Panc1 (cell line): ENCODE measurements at regions of chr6 and their contacts with region 1.

Region 1: GRCh38 chr6:30678964-30679726 is 6.3 kb upstream of the DHX16 start:
- DNase-seq: no peak
- ATAC-seq: peak; percentile 78
- H3K4me3 ChIP-seq: peak overlapping the region; percentile 1 to 45; a peak in 3 of 4 replicates
- H3K27ac ChIP-seq: peak overlapping the region; percentile 64
- H3K4me1 ChIP-seq: peaks cover 19% of the 10 kb centered on the region
- H3K27me3 ChIP-seq: no peaks in the 10 kb centered on the region
- CTCF ChIP-seq: peak; percentile 98

Region 2: DNA sequence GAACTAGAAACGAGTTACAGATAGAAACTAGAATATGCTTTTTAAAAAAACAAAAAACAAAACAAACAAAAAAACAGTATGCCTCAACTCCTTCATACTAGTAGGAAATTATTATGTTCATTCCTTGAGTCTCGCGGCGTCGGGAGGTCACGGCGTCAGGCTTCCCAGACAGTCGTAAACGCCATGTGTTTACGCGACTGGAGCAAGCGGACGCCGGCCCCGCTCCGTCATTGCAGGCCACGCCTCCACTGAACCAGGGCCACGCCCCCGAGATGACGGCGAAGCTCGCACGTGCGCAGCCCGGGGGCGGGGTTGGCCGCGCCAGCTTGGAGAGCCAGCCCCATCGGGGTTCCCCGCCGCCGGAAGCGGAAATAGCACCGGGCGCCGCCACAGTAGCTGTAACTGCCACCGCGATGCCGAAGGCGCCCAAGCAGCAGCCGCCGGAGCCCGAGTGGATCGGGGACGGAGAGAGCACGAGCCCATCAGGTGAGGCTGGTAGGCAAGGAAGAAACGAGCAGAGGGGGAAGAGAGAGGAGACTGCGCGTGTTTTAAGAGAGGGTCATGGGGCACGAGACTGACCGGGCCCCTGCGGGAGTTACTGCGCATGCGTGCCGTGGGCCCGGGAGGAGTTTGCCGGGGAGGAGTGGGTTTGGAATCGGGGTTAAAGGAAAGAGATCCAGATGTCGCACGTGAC is 107.9 kb before region 1 on chr6 and contains the start of gene ABCF1:
- CTCF ChIA-PET with region 1: no interaction called
- POLR2A ChIA-PET with region 1: no interaction called
- in situ Hi-C with region 1: no loop called
- intact Hi-C with region 1: no loop called
- DNase-seq: peak; percentile 81
- ATAC-seq: peak; percentile 97
- H3K4me3 ChIP-seq: peak within 1 kb of the TSS; percentile 88 to 97
- H3K27ac ChIP-seq: peak within 1 kb of the TSS; percentile 95
- H3K4me1 ChIP-seq: peaks cover 24% of the 10 kb centered on the region
- H3K27me3 ChIP-seq: no peaks in the 10 kb centered on the region
- CTCF ChIP-seq: no peak
- total RNA-seq, gene ABCF1: 94.9 TPM

Region 3: DNA sequence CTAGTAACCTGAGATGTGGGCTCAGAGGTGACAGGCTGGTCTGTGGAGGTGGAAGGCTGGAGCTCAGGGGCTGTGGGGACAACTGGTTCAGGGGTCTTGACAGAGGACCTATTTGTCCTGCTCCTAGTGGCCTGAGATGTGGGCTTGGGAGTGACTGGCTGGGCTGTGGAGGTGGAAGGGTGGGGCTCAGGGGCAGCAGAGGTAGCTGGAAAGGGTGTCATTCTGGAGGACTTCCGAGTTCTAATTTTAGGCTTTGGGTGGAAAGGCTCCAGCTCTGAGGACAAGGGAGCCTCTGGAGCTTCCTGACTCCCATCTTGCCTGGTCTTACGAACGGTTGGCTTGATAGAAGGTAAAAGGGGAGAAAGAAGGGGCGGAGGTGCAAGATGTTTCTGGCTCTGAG is 26.5 kb after region 1 on chr6:
- CTCF ChIA-PET with region 1: interaction called, 4 read pairs
- POLR2A ChIA-PET with region 1: interaction called, 10 read pairs
- in situ Hi-C with region 1: no loop called
- intact Hi-C with region 1: no loop called
- DNase-seq: no peak
- ATAC-seq: no peak
- H3K4me3 ChIP-seq: no peak overlapping the region
- H3K27ac ChIP-seq: no peak overlapping the region
- H3K4me1 ChIP-seq: peaks cover 11% of the 10 kb centered on the region
- H3K27me3 ChIP-seq: no peaks in the 10 kb centered on the region
- CTCF ChIP-seq: no peak

Region 4: DNA sequence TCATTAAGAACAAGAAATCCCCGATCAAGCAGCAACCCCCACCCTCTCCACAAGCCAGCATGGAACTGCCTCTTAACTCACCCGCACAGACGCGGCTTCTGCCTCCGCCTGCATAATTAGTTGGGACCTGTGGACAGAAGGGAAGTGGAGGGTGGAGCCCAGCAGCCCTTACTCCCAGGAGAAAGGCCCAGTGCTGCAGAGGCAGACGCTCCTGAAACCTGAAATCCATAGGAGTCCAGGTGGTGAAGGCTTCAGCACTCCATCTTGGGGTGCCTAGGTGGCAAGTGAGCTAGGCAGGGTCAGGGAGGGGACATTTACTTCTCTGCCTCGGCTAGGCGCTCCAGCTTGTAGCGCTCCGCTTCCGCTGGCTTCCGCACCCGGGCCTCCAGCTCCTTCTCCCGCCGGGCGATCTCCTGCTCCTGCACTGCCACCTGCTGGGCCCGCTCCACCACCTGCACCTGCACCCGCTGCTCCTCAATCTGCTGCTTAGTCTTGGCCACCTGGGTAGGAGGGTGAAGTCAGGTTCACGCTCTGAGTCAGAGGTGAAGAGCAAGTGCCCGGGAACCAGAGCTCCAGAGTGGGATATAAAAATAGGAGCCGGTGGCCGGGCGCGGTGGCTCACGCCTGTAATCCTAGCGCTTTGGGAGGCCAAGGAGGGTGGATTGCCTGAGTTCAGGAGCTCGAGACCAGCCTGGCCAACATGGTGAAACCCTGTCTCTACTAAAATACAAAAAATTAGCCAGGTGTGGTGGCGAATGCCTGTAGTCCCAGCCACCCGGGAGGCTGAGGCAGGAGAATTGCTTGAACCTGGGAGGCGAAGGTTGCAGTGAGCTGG is 51.7 kb after region 1 on chr6:
- CTCF ChIA-PET with region 1: interaction called, 5 read pairs
- POLR2A ChIA-PET with region 1: interaction called, 3 read pairs
- in situ Hi-C with region 1: no loop called
- intact Hi-C with region 1: loop called (anchors 2 kb)
- DNase-seq: no peak
- ATAC-seq: peak; percentile 59
- H3K4me3 ChIP-seq: no peak overlapping the region
- H3K27ac ChIP-seq: no peak overlapping the region
- H3K4me1 ChIP-seq: 0 out of 2 replicates have a peak, but pooled peaks cover 4% of the 10 kb centered on the region
- H3K27me3 ChIP-seq: no peaks in the 10 kb centered on the region
- CTCF ChIP-seq: peak; percentile 83

Region 5: DNA sequence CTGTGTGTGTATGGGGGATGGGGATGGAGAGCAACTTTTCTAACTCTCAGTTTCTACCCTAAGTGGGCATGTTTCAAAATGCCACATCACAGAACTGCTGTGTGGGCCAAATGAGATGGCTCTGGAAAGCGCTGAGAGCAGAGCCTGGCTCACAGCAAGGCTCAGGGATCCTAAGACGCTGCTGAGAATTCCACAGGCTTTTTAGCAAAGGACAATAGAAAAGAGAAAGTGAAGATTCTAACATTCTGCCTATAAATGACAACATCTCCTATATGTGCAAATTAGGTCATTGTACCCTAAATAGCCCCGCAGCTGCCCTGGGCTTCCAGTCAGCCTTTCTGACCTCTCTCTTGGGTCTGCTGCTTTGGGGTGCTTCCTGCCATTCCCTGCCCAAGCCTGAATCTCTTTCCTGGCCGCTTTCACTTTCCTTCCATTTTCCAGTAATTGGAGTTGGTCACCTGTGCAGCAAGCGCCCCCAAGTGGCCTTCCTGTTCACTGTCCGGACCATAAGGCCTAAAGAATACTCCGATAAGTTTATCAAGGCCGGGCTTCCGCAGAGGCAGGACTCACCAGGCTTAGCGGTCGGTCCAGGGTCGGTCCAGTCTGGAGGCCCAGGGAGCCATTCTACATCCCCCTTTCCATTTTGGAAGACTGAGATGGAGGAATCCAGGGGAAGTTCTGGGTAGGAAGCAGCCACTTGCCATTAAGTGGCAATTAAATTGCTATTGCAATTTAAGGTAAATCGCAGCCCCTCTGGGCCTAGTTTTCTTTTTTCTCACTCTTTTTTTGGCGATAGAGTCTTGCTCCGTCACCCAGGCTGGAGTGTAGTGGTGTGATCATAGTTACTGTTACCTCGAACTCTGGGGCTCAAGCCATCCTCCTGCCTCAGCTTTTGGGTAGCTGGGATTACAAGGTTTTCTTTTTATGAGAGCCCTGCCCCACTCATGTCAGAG is 198.6 kb after region 1 on chr6:
- CTCF ChIA-PET with region 1: no interaction called
- POLR2A ChIA-PET with region 1: no interaction called
- in situ Hi-C with region 1: no loop called
- intact Hi-C with region 1: loop called (anchors 5 kb)
- DNase-seq: peak; percentile 73
- ATAC-seq: peak; percentile 90
- H3K4me3 ChIP-seq: peak overlapping the region; percentile 19 to 57; a peak in 3 of 4 replicates
- H3K27ac ChIP-seq: peak overlapping the region; percentile 82
- H3K4me1 ChIP-seq: peaks cover 23% of the 10 kb centered on the region
- H3K27me3 ChIP-seq: no peaks in the 10 kb centered on the region
- CTCF ChIP-seq: peak; percentile 96

Region 6: DNA sequence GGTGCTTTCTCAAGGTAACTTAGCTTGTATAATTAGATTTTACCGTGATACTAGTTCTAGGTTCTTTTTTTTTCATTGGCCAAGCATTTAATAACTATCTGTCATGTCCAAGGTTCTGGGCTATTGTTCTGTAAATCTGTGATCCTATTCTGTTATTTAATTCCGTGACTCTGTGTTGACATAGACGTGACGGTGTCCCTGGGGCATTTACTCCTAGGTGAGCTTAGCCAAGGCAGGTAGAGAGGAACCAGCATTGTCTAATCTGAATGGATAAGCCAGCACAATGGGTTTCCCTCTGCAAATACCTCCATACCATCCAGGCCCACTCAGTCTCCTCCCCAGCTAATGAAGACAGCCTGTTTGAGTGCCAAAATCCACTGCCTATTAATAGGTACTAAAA is 450.0 kb after region 1 on chr6:
- CTCF ChIA-PET with region 1: no interaction called
- POLR2A ChIA-PET with region 1: interaction called, 10 read pairs
- in situ Hi-C with region 1: no loop called
- intact Hi-C with region 1: no loop called
- DNase-seq: no peak
- ATAC-seq: no peak
- H3K4me3 ChIP-seq: no peak overlapping the region
- H3K27ac ChIP-seq: no peak overlapping the region
- H3K4me1 ChIP-seq: peaks cover 7% of the 10 kb centered on the region
- H3K27me3 ChIP-seq: peaks cover 2% of the 10 kb centered on the region; the same call in 1 of the 2 replicates
- CTCF ChIP-seq: no peak